ENCODE measurements at regions of chr3 and their contacts with region 1.

Region 1: DNA sequence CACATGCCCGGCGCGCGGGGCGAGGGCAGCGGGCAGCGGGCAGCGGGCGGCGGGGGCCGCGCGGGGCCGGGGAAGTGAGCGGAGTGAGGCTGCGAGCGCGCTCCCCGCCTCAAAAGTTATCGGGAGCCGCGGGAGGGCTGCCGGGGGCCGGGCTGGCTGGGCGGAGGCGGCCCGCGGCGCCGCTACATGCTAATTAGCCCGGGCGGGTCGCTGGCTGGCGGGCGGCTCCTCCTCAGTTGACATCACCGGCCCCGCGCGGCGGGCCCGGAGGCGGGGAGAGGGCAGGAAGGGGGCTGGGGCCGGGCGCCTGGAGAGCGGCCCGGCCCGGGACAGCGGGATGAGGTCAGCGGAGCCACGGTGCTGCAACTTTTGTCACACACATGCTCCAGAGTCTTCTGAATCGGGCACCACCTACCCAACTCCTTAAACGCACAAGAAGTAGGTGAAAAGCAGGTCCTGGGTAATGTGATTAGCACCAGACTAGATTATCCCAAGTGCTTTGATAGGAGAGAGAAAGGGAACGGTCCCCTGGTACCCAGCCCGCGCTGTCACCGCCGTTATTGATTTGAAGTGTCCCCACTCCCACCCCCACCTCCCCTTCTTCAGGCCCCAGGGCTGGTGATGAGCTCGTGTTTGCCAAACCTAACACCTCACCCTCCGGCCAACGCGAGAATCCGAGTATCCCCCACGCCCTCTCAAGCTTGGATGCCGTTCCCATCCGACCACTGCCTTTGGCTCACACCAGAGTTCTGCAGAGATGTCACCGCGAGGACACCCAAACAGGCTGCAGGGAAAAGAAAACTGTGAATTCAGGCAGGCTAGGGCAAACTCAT is at the start of gene HEG1:
- DNase-seq: peak; percentile 29 to 86 (median 76)
- H3K4me3 ChIP-seq: peak within 1 kb of the TSS; percentile 56 to 89 (median 74)
- H3K27ac ChIP-seq: peak within 1 kb of the TSS; percentile 13 to 93 (median 85)
- H3K27me3 ChIP-seq: no peaks in the 10 kb centered on the region
- CTCF ChIP-seq: peak in 4 of 56 donors; percentile 10 to 17 (median 10)
- total RNA-seq, gene HEG1: 12.8 to 65.6 (median 29.0) TPM

Region 2: GRCh38 chr3:125003369-125003853 is 52.7 kb before region 1 on chr3:
- intact Hi-C with region 1: loop called in 1 of 2 experiments (anchors 5 kb)
- DNase-seq: peak in 1 of 10 donors; percentile 34
- H3K4me3 ChIP-seq: peak overlapping the region in 1 of 59 donors; percentile 13
- H3K27ac ChIP-seq: peak overlapping the region in 49 of 59 donors; percentile 1 to 78 (median 52)
- H3K27me3 ChIP-seq: no peaks in the 10 kb centered on the region
- CTCF ChIP-seq: no peak

Region 3: DNA sequence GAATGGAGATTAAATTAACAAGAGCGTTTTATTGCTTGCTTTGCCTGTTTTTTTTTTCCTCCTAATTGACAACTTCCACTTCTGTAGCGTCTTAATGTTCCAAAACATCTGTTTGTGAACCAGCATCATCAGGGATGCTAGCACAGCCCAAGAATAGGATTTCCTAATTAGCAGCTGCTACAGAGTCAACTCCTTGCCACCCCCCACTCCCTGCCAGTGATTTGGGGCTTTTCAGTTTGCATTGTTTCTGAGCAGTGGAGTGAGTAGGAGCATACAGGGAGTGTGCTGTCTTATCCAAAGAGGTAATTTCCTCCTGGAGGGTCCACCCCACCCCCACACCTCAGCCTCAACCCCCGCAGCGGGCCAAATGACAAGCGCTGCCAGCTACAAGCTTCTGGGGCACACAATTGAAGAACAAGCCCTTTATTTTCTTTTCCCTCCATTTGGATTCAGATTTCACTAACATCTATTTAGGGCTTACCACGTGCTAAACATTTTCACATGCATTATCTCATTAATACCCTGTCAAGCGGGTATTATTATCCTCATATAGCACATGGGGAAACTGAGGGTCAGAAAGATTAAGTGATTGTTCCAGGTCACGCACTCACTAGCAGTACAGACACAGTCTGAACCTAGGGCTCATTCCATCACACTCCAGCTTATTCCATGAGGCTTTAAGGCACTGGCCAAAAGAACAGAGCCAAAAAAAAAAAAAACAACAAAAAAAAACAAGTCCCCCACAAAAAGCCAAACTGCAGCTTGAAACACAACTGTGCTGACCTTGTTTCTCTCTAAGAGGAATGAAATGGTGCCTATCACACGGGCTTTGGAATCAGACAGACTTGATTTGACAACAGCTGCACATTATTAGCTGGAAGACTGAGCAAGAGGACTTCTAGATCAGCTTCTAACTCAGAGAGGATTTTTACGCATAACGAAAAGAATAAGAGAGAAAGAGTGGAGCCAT is 16.7 kb before region 1 on chr3:
- intact Hi-C with region 1: loop called in 1 of 2 experiments (anchors 2 kb)
- DNase-seq: peak in 5 of 10 donors; percentile 25 to 53 (median 32)
- H3K4me3 ChIP-seq: peak overlapping the region in 45 of 59 donors; percentile 0 to 55 (median 22)
- H3K27ac ChIP-seq: peak overlapping the region; percentile 27 to 90 (median 81)
- H3K27me3 ChIP-seq: no peaks in the 10 kb centered on the region
- CTCF ChIP-seq: no peak

Region 4: DNA sequence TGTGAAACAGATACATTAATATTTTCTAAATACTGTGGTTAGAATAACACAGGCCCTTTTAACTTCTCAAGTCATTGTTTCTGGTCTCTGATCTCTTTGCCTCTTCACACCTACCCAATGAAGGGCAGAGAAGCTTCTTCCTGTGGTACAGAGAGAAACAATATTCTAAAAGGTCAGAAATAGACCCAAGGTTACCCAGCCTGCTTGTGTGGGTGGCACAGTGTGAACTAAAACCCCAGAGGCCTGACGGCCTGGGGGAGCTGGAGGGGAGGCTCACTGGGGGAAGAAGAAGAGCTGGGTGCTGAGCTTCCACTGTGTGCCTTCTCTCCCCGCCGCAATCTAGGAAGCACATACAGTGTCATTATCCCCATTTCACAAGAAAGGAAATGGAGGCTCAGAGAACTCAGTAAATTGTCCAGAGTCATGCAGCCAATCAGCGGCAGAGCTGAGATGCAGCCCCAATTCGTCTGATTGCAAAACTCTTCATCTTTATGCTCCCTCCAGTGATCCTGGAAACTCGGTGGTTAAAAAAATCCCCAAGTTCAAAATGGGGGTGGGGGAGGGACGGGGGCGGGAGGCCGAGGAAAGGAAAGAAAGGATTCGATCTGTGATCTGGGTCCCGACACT is 63.7 kb after region 1 on chr3:
- intact Hi-C with region 1: loop called in 1 of 2 experiments (anchors 5 kb)
- DNase-seq: no peak
- H3K4me3 ChIP-seq: peak overlapping the region; percentile 24 to 78 (median 57)
- H3K27ac ChIP-seq: peak overlapping the region in 55 of 59 donors; percentile 3 to 93 (median 79)
- H3K27me3 ChIP-seq: no peaks in the 10 kb centered on the region
- CTCF ChIP-seq: no peak

Region 5: DNA sequence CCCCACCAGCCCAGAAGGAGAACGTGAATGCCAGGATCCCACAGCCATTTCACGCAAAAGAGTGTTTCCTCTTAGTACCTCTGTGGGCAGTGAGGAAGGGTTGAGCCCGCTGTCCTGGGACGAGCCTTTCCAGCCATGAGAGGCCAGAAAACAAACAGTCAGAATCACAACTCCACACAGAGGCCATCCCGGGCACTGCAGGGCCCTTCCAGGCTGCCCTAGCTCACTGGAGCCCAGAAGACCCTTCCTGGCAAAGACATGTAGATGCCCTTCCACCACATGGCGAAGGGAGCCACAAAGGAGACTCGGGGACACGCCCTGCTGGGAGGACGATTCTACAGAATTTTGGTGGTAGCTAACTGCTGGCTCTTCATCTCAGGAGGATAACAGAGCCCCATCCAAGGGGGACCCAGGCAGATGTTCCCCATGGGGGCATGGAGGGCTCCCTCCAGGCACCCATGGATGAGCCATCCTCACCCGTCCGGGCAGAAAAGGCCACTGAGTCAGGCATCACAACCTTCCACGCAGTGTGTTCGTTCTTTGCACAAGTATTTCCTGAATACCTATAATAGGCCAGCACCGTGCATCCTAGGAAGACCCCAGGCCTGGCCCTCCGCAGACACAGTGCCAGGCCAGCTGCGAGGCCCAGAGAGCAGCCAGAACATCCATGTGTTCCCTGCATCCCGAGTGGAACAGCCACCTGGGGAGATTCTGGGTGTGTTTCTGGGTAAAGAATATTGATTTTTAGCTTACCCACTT is 109.2 kb after region 1 on chr3:
- intact Hi-C with region 1: loop called in 1 of 2 experiments (anchors 5 kb)
- DNase-seq: no peak
- H3K4me3 ChIP-seq: no peak overlapping the region
- H3K27ac ChIP-seq: no peak overlapping the region
- H3K27me3 ChIP-seq: no peaks in the 10 kb centered on the region
- CTCF ChIP-seq: peak in 54 of 56 donors; percentile 26 to 74 (median 56)

Region 6: GRCh38 chr3:125374996-125375941 is 319.1 kb after region 1 on chr3 and contains the start of gene ZNF148:
- intact Hi-C with region 1: loop called (anchors 5 to 10 kb)
- DNase-seq: peak; percentile 83 to 94 (median 88)
- H3K4me3 ChIP-seq: peak within 1 kb of the TSS; percentile 60 to 98 (median 86)
- H3K27ac ChIP-seq: peak within 1 kb of the TSS; percentile 73 to 97 (median 91)
- H3K27me3 ChIP-seq: no peaks in the 10 kb centered on the region
- CTCF ChIP-seq: peak in 51 of 56 donors; percentile 15 to 67 (median 44)
- total RNA-seq, gene ZNF148: 55.2 to 94.4 (median 74.4) TPM